Activated T-helper 1 cell treated with anti-CD3 and anti-CD28 coated beads, Interleukin-12 subunit alpha, Interleukin-12 subunit beta, Interleukin-2, Interleukin-4 antibody, amounts not matched to agents 30 ng/mL and 10 ng/mL and 1 ng/mL, durations not matched to agents 14 hours and 24 hours and 36 hours (primary cell): ENCODE measurements at regions of chr7 and their contacts with region 1.

Region 1: DNA sequence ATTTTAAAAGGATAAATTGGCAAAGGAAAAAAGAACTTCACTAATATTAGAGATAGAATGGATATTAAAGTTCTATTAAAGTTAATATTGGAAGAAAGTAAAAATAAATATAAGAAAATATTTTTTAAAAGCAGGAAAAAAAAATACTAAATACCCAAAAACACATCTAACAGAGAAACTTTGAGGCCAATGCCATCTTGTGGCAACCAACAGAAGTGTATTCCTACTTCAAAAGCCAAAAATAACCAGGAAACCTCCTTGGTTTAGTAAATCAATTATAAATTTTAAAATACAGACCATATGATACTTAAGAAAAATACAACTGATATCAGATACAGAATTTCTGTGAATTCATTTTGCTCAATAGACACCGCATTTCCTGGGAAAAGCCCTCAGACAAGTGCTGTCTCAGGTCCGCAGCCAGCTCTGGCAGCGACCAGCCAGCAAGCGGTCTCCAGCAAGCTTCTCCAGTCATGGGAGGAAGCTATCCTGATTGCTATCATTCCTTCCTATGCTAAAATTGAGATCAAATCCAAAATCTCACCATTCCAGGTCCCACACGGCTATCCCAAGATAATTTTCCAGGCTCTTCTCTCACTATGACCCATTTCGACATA is 65.3 kb downstream of the LMBR1 start:
- DNase-seq: no peak
- H3K4me3 Mint-ChIP-seq: no peak overlapping the region
- H3K27ac Mint-ChIP-seq: no peak overlapping the region
- H3K4me1 Mint-ChIP-seq: no peaks in the 10 kb centered on the region
- H3K27me3 Mint-ChIP-seq: no peaks in the 10 kb centered on the region

Region 2: GRCh38 chr7:155796381-155797261 is 1031.1 kb before region 1 on chr7:
- intact Hi-C with region 1: loop called (anchors 5 kb)
- DNase-seq: peak; percentile 50
- H3K4me3 Mint-ChIP-seq: no peak overlapping the region
- H3K27ac Mint-ChIP-seq: no peak overlapping the region
- H3K4me1 Mint-ChIP-seq: peaks cover 9% of the 10 kb centered on the region
- H3K27me3 Mint-ChIP-seq: peaks cover 31% of the 10 kb centered on the region

Region 3: DNA sequence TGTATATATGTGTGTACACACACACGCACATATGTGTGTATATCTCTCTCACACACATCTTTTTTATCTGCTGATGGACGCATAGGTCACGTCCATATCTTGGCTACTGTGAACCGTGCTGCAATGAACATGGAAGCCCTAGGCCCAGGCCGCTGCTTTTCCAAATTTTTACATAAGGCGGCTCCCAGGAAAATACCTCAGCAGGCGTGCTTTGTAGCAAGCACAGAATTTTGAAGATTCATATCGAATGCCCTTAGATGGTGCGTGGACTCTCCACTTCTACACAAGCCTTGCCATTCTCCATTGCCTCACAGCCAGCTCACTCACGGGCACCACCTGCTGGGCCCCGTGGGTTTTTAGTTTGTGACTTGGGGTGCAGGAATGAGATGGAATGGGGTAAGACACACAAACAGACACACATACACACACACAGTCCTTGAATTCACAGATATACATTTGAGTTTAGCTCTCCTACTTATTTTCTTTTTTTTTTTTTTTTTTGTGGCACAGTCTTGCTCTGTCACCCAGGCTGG is 245.0 kb before region 1 on chr7:
- intact Hi-C with region 1: no loop called
- DNase-seq: no peak
- H3K4me3 Mint-ChIP-seq: no peak overlapping the region
- H3K27ac Mint-ChIP-seq: no peak overlapping the region
- H3K4me1 Mint-ChIP-seq: peaks cover 10% of the 10 kb centered on the region
- H3K27me3 Mint-ChIP-seq: peaks cover 25% of the 10 kb centered on the region

Region 4: DNA sequence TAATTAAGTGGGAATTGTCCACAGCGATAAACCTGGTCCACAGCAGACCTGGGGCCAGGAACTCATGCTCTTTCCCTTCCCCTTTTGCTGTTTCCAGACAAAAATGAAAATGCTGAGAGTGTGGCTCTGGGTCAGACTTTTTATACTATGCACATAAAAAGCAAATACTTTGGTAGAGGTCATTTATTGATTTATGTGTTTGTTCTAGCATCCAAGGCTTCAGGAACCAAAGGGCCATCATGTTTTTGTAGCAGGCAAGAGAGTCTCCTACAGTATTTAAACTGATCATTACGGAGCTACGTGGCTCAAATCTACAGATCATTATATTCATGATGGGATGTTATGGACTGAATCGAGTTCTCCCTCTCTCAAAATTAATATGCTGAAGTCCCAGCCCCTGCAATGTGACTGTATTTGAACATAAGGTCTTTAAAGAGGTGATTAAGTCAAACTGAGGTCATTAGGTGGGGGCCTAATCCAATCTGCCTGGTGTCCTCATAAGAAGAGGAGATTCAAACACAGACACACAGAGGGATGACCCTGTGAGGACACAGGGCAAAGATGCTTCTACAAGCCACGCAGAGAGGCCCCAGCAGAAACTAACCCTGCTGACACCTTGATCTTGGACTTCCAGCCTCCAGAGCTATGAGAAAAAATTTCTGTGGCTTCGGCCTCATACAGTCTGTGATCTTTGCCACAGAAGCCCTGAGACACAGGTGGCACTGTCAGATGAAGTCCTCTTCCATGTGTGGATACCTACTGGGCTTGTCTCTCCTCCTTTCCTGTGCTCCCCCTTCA is 233.2 kb before region 1 on chr7:
- intact Hi-C with region 1: no loop called
- DNase-seq: no peak
- H3K4me3 Mint-ChIP-seq: no peak overlapping the region
- H3K27ac Mint-ChIP-seq: no peak overlapping the region
- H3K4me1 Mint-ChIP-seq: no peaks in the 10 kb centered on the region
- H3K27me3 Mint-ChIP-seq: peaks cover 14% of the 10 kb centered on the region